Mammary epithelial cell (primary cell): ENCODE measurements at regions of chr21 and their contacts with region 1.

Region 1: GRCh38 chr21:17819114-17819876 is at the start of gene C21orf91:
- DNase-seq: peak; percentile 79
- H3K4me3 ChIP-seq: peak within 1 kb of the TSS; percentile 74 to 95 (median 95)
- H3K27ac ChIP-seq: peak within 1 kb of the TSS; percentile 86
- H3K4me1 ChIP-seq: peaks cover 10% of the 10 kb centered on the region
- H3K27me3 ChIP-seq: no peaks in the 10 kb centered on the region
- CTCF ChIP-seq: no peak
- total RNA-seq, gene C21orf91: 35.2 to 38.9 TPM

Region 2: GRCh38 chr21:17611414-17612022 is 207.8 kb before region 1 on chr21:
- CTCF ChIA-PET with region 1: no interaction called
- dilution Hi-C with region 1: no loop called
- in situ Hi-C with region 1: no loop called
- intact Hi-C with region 1: loop called (anchors 10 kb)
- DNase-seq: peak; percentile 89
- H3K4me3 ChIP-seq: peak overlapping the region; percentile 75 to 93 (median 90)
- H3K27ac ChIP-seq: peak overlapping the region; percentile 96
- H3K4me1 ChIP-seq: peaks cover 27% of the 10 kb centered on the region
- H3K27me3 ChIP-seq: no peaks in the 10 kb centered on the region
- CTCF ChIP-seq: peak in 1 of 2 donors; percentile 3

Region 3: GRCh38 chr21:17679002-17679600 is 140.2 kb before region 1 on chr21:
- CTCF ChIA-PET with region 1: no interaction called
- dilution Hi-C with region 1: no loop called
- in situ Hi-C with region 1: no loop called
- intact Hi-C with region 1: loop called (anchors 2 kb)
- DNase-seq: peak; percentile 43
- H3K4me3 ChIP-seq: no peak overlapping the region
- H3K27ac ChIP-seq: no peak overlapping the region
- H3K4me1 ChIP-seq: peaks cover under 1% of the 10 kb centered on the region
- H3K27me3 ChIP-seq: no peaks in the 10 kb centered on the region
- CTCF ChIP-seq: peak; percentile 74

Region 4: DNA sequence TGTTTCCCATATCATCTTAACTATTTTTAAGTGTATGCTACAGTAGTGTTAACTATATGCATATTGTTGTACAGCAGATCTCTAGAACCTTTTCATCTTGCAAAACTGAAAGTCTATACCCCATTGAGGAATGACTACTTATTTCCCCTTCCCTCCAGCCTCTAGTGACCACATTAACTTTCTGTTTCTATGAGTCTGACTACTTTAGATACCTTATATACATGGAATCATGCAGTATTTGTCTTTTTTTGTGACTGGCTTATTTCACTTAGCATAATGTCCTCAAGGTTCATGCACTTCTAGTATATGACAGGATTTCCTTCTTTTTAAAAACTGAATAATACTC is 110.1 kb before region 1 on chr21:
- CTCF ChIA-PET with region 1: no interaction called
- dilution Hi-C with region 1: no loop called
- in situ Hi-C with region 1: no loop called
- intact Hi-C with region 1: no loop called
- DNase-seq: no peak
- H3K4me3 ChIP-seq: no peak overlapping the region
- H3K27ac ChIP-seq: peak overlapping the region; percentile 85
- H3K4me1 ChIP-seq: peaks cover 24% of the 10 kb centered on the region
- H3K27me3 ChIP-seq: no peaks in the 10 kb centered on the region
- CTCF ChIP-seq: no peak

Region 5: DNA sequence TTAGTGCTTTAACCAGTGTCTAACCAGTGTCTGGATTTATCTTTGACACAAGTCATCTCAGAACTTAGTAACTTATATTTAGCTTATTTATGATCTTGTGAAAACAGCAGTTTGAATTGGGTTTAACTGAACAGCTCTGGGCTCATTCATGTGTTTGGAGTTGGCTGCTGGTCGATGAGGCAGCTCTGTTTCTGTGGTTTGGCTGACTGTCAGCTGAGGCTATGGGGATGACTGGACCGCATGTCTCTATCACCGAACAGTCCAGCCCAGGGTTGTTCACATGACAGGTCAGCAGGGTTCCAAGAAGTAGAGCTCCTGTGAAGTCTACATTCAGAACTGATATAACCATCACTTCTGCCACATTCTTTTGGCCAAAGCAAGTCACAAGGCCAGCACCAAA is 28.9 kb after region 1 on chr21:
- CTCF ChIA-PET with region 1: no interaction called
- dilution Hi-C with region 1: no loop called
- in situ Hi-C with region 1: no loop called
- intact Hi-C with region 1: loop called (anchors 2 kb)
- DNase-seq: peak; percentile 89
- H3K4me3 ChIP-seq: no peak overlapping the region
- H3K27ac ChIP-seq: no peak overlapping the region
- H3K4me1 ChIP-seq: peaks cover 24% of the 10 kb centered on the region
- H3K27me3 ChIP-seq: no peaks in the 10 kb centered on the region
- CTCF ChIP-seq: no peak

Region 6: DNA sequence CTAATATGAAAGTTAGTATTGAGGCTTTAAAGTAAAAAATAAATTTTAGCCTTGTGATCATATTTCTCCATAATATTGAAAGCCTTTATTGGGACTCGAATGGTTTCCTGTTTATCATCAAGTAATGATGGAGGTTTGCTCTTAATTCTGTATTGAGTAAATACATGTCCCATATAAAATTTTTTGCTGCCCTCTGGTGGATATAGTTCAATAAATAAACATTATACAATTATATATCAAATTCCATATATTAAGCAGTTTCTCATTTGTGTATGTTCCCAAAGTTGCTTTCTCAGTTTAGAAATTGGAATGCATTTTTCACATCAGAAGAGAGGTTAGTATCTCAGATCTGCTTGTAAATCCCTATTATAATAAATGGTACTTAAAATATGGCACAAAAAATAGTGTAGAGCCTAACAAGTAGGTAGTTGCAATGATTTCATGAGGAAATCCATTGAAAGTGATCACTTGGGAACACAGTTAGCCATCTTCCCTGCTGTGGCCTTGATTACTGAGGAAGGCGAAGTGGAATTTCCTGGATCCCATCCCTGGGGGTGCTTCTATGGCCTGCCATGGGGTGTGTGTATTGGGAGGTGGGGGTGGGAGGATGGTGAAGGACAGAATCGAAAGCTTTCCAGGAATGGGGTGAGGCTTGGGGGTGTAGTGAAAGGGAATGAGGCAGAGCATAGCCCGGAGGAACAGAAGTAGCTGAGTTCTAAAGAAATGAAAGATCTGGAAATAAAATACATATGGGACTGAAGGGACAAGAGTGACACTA is 83.9 kb after region 1 on chr21:
- CTCF ChIA-PET with region 1: no interaction called
- dilution Hi-C with region 1: no loop called
- in situ Hi-C with region 1: loop called in 1 of 2 experiments (anchors 10 kb)
- intact Hi-C with region 1: loop called (anchors 5 kb)
- DNase-seq: no peak
- H3K4me3 ChIP-seq: no peak overlapping the region
- H3K27ac ChIP-seq: no peak overlapping the region
- H3K4me1 ChIP-seq: peaks cover 3% of the 10 kb centered on the region
- H3K27me3 ChIP-seq: no peaks in the 10 kb centered on the region
- CTCF ChIP-seq: peak in 1 of 2 donors; percentile 25

Region 7: DNA sequence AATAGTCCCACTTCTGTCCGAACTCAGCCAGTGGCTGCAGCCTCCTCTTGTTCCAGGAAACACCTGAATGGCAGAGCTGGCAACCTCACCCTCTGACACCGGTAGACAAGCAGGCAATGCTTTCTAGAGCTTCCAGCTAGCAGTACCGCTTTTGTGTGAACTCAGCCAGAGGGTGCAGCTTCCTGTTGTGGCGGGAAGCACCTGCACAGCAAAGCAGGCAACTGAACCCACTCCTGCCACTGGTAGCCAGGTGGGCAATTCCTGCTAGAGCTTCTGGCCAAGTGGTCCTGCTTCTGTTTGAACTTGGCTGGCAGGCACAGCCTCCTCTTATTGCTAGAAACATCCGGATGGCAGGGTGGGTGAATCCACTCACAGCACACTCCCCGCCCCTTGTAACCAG is 624.4 kb after region 1 on chr21:
- CTCF ChIA-PET with region 1: no interaction called
- dilution Hi-C with region 1: no loop called
- in situ Hi-C with region 1: no loop called
- intact Hi-C with region 1: no loop called
- DNase-seq: no peak
- H3K4me3 ChIP-seq: no peak overlapping the region
- H3K27ac ChIP-seq: no peak overlapping the region
- H3K4me1 ChIP-seq: no peaks in the 10 kb centered on the region
- H3K27me3 ChIP-seq: no peaks in the 10 kb centered on the region
- CTCF ChIP-seq: no peak